PC-3 (cell line): ENCODE measurements at regions of chr4 and their contacts with region 1.

Region 1: GRCh38 chr4:20194124-20195013 is 57.3 kb upstream of the SLIT2 start:
- DNase-seq: peak; percentile 87
- ATAC-seq: peak; percentile 50
- H3K4me3 ChIP-seq: peak overlapping the region; percentile 46; the same call in 1 of the 2 replicates
- H3K27ac ChIP-seq: peak overlapping the region; percentile 100
- H3K4me1 ChIP-seq: peaks cover 64% of the 10 kb centered on the region
- H3K27me3 ChIP-seq: no peaks in the 10 kb centered on the region
- CTCF ChIP-seq: no peak

Region 2: DNA sequence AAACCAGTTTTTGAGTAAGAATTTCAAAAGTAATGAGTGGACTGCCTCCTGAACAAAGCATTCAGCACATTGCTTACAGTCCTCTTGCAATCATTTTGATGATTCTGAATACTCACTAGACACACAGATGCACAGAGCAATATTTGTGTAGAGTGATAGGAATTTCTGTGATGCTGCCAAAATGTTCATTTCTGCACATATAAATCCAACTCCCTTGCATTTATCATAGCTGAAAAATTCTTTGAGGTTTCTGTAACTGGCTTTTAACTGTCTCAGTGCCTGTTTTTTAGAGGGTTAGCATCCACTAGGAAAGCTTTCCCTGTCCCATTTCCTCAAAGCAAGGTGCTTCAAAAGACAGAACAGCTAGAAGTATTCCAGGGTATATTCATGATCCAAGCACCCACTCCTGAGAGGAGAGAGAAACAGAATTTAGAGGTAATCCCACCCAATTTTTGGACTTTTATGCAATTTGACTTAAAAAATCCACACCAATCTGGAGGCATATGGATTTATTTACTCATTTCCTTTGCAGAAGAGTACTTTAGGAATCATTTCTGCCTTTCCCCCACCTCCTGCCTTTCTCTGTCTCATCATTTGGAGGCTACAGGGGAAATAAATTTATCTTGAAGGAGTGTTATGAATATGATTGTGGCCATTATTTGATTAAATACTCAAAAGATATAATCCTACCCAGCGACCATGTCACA is 177.1 kb before region 1 on chr4:
- CTCF ChIA-PET with region 1: no interaction called
- POLR2A ChIA-PET with region 1: no interaction called
- intact Hi-C with region 1: loop called (anchors 2 kb)
- DNase-seq: peak; percentile 61
- ATAC-seq: peak; percentile 27
- H3K4me3 ChIP-seq: no peak overlapping the region
- H3K27ac ChIP-seq: peak overlapping the region; percentile 34
- H3K4me1 ChIP-seq: peaks cover 43% of the 10 kb centered on the region
- H3K27me3 ChIP-seq: no peaks in the 10 kb centered on the region
- CTCF ChIP-seq: no peak